Esophagus muscularis mucosa (tissue), 4 donors: ENCODE measurements at regions of chr1 and their contacts with region 1.

Region 1: GRCh38 chr1:54810100-54810942 is 9.2 kb upstream of the TTC22 start:
- DNase-seq: no peak
- H3K4me3 ChIP-seq: no peak overlapping the region
- H3K27ac ChIP-seq: no peak overlapping the region
- H3K4me1 ChIP-seq: peaks cover 0 to 4% (median 0%) of the 10 kb centered on the region in 4 donors
- H3K27me3 ChIP-seq: peaks cover 0 to 20% (median 0%) of the 10 kb centered on the region in 4 donors
- CTCF ChIP-seq: peak; percentile 65 to 78 (median 77)
- EP300 ChIP-seq: no peak
- POLR2A ChIP-seq: no peak

Region 2: GRCh38 chr1:54070171-54070837 is 740.0 kb before region 1 on chr1:
- intact Hi-C with region 1: loop called (anchors 10 kb)
- DNase-seq: no peak
- H3K4me3 ChIP-seq: no peak overlapping the region
- H3K27ac ChIP-seq: no peak overlapping the region
- H3K4me1 ChIP-seq: no peaks in the 10 kb centered on the region
- H3K27me3 ChIP-seq: no peaks in the 10 kb centered on the region
- CTCF ChIP-seq: peak; percentile 63 to 75 (median 68)
- EP300 ChIP-seq: no peak
- POLR2A ChIP-seq: no peak

Region 3: GRCh38 chr1:54671985-54672608 is 138.2 kb before region 1 on chr1:
- intact Hi-C with region 1: loop called (anchors 10 kb)
- DNase-seq: no peak
- H3K4me3 ChIP-seq: no peak overlapping the region
- H3K27ac ChIP-seq: no peak overlapping the region
- H3K4me1 ChIP-seq: no peaks in the 10 kb centered on the region
- H3K27me3 ChIP-seq: no peaks in the 10 kb centered on the region
- CTCF ChIP-seq: peak; percentile 37 to 65 (median 37)
- EP300 ChIP-seq: no peak
- POLR2A ChIP-seq: no peak

Region 4: GRCh38 chr1:54742282-54742681 is 68.0 kb before region 1 on chr1:
- intact Hi-C with region 1: no loop called
- DNase-seq: no peak
- H3K4me3 ChIP-seq: no peak overlapping the region
- H3K27ac ChIP-seq: no peak overlapping the region
- H3K4me1 ChIP-seq: no peaks in the 10 kb centered on the region
- H3K27me3 ChIP-seq: no peaks in the 10 kb centered on the region
- CTCF ChIP-seq: no peak
- EP300 ChIP-seq: no peak
- POLR2A ChIP-seq: no peak